ENCODE measurements at regions of chr4 and their contacts with region 1.

Region 1: DNA sequence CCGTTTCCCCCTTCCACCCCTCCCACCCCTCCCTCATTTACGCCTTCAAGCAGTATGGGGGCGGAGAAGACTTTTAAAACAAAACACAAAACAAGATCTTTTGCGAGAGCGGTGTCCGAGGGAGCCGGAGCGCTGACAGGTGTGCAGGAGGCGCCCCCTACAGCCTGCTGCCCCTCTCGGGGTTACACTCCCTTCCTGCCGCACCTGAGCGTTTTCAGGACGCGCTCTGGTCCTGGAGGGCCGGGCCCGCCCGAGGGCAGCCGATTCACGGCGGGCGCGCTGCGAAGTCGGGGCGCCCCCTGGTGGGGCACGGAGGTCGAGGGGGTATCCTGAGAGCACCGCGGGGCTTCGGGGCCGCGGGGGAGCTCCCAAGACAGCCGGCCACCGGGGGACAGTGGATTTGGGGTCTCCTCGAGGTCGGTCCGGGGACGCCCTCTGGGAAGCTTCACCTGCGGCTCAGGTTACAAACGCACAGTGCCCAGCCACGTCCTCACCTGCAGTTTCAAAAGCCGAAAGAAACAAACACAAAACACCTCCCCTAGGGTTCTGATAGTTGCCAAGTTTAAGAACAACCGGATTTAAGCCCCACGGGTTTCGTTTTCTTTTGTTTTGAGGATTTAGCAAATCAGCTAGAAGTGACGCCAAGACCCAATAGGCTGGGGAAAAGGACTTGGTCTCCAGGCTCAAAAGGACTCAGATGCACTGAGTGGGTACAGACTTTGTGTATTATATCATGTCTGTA is 8.0 kb upstream of the NEUROG2 start:
- DNase-seq: peak; percentile 89
- ATAC-seq: peak; percentile 96
- H3K4me3 Mint-ChIP-seq: peak overlapping the region; percentile 71
- H3K27ac Mint-ChIP-seq: no peak overlapping the region
- H3K4me1 Mint-ChIP-seq: peaks cover 25% of the 10 kb centered on the region
- H3K27me3 Mint-ChIP-seq: peaks cover 49% of the 10 kb centered on the region
- CTCF ChIP-seq: peak; percentile 96

Region 2: DNA sequence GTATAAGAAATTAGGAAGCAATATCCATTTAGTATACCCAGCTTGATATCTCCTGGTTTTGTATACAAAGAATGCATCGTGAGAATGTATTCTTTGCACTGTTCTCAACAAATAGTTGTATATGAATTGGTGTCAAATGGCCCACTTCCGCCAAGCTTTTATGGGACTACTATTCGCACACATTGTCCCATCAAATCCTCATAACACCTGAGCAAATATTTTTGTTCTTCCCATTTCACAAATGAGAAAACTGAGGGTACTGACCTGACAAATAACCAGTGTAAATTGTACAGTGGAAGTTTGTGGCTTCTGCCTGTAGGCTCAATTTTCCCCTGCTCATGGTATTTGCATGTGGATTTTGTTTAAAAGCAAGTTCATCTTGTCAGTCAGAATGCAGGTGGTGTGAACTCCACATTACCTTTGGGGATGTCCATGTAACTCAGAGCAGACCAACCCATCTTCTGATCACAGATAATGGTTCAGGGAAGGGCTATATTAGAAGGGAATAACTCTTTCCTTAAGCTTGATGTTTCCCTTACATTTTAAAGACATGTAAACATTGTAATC is 430.2 kb before region 1 on chr4:
- CTCF ChIA-PET with region 1: interaction called, 44 read pairs
- POLR2A ChIA-PET with region 1: no interaction called
- intact Hi-C with region 1: no loop called
- DNase-seq: no peak
- ATAC-seq: no peak
- H3K4me3 Mint-ChIP-seq: no peak overlapping the region
- H3K27ac Mint-ChIP-seq: no peak overlapping the region
- H3K4me1 Mint-ChIP-seq: no peaks in the 10 kb centered on the region
- H3K27me3 Mint-ChIP-seq: peaks cover 10% of the 10 kb centered on the region
- CTCF ChIP-seq: no peak

Region 3: DNA sequence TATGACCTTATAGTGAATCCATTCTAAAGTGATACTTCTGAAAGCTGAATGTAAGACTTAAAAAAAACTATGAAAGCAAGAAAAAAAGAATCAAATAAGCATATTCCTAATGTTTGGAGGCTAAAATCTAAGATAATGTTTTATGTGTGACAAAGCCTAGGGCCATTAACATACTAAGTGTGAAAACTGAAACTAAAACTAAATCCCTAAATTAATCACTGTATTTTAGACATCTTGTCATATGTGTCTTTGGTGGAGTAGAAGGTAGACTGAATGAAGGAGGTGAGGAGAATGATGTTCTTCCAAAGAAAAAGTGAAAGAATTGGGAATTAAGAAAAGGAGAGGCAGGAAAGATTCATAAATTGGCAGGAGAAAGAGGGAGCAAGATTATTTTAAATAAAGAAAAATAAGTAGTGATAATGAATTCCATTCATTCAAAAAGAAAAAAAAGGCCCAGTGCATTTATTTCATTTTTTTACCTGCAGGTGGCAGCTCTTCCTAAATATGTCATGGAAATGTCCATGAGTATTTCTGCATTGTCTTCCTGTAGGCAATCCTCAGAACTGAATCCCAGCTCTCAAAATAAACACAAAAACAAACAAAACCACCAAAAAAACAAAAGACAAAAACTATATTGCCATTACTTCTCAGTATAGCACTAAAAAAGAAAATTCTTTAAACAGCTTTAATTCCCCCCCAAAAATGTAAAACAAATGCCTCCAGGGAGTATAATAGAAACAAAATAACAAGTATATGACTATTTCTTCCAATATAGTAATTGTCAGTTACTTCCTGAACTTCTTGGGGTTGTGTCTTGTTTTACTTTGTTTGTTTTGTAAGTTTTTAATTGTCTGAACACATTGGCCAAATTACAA is 309.3 kb before region 1 on chr4:
- CTCF ChIA-PET with region 1: interaction called, 10 read pairs
- POLR2A ChIA-PET with region 1: no interaction called
- intact Hi-C with region 1: no loop called
- DNase-seq: no peak
- ATAC-seq: peak; percentile 75
- H3K4me3 Mint-ChIP-seq: no peak overlapping the region
- H3K27ac Mint-ChIP-seq: no peak overlapping the region
- H3K4me1 Mint-ChIP-seq: peaks cover 9% of the 10 kb centered on the region
- H3K27me3 Mint-ChIP-seq: no peaks in the 10 kb centered on the region
- CTCF ChIP-seq: peak; percentile 63

Region 4: DNA sequence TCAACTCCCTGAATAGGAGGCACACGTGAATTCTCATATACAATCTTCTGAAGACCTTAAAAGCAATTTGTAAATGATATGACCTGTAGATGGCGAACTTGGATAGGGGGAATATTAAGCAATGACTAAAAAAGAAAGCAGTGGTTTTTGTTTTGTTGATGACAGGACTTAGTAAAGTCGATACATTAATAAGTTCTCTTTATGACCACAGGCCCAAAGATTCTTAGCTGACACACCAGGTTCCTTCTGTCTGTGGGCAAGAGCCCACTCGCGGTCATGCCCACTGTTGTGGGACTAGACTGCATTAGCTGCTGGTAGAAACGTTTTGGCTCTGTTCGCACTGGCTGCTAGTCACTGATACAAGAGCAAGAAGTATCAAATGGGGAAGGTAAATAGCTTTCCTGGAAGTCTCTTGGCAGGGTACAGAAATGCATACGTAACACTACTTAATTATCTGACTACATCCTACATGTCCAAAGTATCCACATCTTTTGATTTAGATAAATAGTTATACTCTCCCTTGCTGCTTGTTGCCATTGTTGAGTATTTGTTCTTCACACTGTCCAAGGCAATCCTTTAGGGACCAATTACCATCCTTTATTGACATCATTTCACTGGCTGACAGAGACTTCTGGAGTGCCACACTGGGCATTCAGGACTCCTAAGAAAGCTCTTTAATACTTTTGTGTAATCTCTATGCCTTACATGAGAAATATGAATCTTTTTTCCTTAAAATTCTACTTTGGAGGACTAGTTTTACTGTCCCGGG is 195.8 kb before region 1 on chr4:
- CTCF ChIA-PET with region 1: interaction called, 45 read pairs
- POLR2A ChIA-PET with region 1: no interaction called
- intact Hi-C with region 1: loop called (anchors 2 kb)
- DNase-seq: peak; percentile 21
- ATAC-seq: peak; percentile 55
- H3K4me3 Mint-ChIP-seq: no peak overlapping the region
- H3K27ac Mint-ChIP-seq: no peak overlapping the region
- H3K4me1 Mint-ChIP-seq: no peaks in the 10 kb centered on the region
- H3K27me3 Mint-ChIP-seq: no peaks in the 10 kb centered on the region
- CTCF ChIP-seq: peak; percentile 49

Region 5: GRCh38 chr4:112509243-112510141 is 14.4 kb before region 1 on chr4:
- CTCF ChIA-PET with region 1: interaction called, 65 read pairs
- POLR2A ChIA-PET with region 1: interaction called, 4 read pairs
- intact Hi-C with region 1: no loop called
- DNase-seq: peak; percentile 26
- ATAC-seq: no peak
- H3K4me3 Mint-ChIP-seq: peak overlapping the region; percentile 7
- H3K27ac Mint-ChIP-seq: no peak overlapping the region
- H3K4me1 Mint-ChIP-seq: peaks cover 31% of the 10 kb centered on the region
- H3K27me3 Mint-ChIP-seq: peaks cover 74% of the 10 kb centered on the region
- CTCF ChIP-seq: no peak

Measured in activated CD8-positive, alpha-beta T cell treated with anti-CD3 and anti-CD28 coated beads for 36 hours (primary cell).